RWPE1 (cell line): ENCODE measurements at regions of chr15 and their contacts with region 1.

Region 1: DNA sequence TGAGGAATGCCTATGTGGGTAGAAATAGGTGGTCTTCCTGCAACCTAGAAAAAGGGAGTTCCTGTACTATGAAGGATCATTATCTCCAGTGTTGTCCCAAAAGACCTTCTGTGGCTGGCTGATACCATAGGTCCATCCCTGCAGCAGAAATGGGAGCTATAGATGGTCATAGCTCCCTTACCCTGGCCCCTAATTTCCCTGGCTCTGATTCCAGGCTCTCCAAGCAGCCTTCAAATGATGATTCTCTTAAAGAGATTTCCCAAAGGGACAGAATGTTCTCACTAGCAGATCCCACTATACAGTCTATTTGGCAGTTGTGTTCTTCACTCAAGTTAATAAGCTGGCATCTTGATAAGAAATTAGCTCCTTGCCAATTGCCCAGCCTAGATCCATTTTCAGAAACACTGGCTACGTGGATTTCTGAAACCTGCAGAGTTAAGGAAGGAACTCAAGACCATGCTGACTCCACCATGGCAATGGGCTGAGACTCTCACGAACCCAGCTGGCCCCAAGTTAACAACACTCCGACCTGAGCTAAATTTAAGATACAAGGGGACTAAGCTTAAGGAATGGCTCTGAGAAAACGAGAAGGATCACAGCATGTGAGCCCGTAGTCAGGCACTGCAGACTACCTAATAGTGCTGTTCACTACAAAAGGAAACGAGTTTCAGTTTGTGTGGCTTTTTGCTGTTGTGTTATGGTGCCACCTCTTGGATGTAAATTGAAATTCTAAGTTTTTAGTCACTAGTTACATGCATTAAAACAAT is 11.4 kb downstream of the C15orf40 start:
- DNase-seq: peak; percentile 60
- H3K27ac ChIP-seq: no peak overlapping the region
- CTCF ChIP-seq: peak; percentile 81

Region 2: DNA sequence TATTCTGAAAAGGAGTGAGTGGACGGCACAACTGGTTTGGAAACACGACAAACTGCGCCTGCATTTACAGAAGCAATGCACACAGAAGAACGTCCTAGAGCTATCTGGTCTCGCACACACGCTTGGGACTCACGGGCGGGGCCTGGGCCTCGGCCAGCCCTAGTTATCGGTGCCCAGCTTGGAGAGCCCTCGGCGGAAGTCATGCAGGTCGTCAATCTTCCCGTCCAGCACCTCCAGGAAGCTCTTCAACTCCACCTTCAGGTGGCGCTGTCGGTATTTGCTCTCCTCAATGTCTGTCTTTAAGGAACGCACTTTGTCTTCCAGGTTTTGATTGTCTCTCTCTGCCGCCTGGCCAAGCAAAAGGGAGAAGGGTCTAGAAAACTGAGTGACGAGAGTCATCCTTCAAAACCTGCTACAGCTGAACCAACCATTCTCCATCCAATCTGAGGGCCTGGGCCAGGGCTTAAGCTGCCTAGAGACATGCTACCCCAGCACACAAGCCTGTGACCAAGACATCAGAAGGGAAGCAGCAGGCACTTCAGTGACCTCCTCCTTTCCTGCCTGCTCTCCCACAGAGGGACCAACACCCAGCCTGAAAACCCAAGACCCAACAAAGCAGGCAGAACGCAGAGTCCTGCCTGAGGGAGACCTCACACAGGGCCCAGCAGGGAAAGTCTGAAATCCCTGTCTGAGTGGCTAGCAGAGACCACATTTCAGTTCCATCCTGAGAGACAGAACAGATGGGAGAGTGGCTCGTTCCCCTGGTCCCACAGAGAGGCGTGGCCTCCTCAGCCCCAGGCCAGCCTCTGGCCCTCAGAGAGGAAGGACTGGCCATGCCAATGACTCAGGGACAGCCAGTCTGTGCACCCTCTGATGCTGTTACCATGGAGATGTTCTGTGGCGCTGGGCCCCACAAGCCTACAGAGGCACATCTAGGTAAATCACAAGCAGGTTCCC is 150.3 kb before region 1 on chr15:
- CTCF ChIA-PET with region 1: interaction called, 17 read pairs
- POLR2A ChIA-PET with region 1: no interaction called
- DNase-seq: peak; percentile 50
- H3K27ac ChIP-seq: peak overlapping the region; percentile 18
- CTCF ChIP-seq: peak; percentile 47